Upper lobe of right lung (tissue), 1 donor: ENCODE measurements at regions of chr3 and their contacts with region 1.

Region 1: GRCh38 chr3:38533285-38533976 is 37.3 kb downstream of the EXOG start:
- DNase-seq: no peak
- ATAC-seq: peak; percentile 34
- H3K4me3 ChIP-seq: no peak overlapping the region
- H3K27ac ChIP-seq: no peak overlapping the region
- H3K4me1 ChIP-seq: no peaks in the 10 kb centered on the region
- H3K27me3 ChIP-seq: no peaks in the 10 kb centered on the region
- CTCF ChIP-seq: no peak

Region 2: DNA sequence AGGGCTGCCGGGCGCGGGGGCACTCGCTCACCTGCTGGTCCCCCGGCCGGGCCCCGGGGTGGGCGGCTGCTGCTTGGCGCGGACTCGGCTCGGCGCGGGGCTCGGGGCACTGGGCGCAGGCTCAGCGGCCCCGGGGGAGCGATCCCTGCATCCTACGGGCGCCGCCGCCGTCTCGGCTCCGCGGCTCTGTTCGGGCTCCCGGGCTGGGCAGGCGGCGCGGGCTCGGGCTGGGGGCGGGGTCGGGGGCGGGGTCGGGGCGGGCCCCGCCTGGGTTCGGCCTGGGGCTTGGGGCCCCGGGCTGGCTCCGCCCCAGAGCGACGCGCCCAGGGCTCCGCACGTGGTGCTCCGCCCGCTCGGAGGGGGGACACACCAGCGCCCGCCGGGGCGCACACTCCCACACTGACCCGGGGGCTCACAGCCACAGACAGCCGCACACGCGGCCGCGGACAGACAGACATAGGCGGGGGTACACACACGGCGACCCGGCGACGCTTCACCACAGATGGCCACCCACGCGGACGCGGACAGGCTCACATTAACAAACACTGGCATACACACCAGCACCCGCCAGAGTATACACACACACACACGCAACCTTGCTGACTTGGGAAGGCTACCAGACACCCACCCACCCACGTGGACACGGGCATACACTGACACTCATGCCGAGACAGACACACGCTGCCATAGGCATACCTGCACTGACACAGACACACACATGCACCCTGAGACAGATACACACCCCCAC is 116.2 kb after region 1 on chr3 and contains the start of gene SCN5A:
- intact Hi-C with region 1: loop called (anchors 10 kb)
- DNase-seq: peak; percentile 70
- ATAC-seq: peak; percentile 83
- H3K4me3 ChIP-seq: peak within 1 kb of the TSS; percentile 47
- H3K27ac ChIP-seq: no peak within 1 kb of the TSS
- H3K4me1 ChIP-seq: peaks cover 7% of the 10 kb centered on the region
- H3K27me3 ChIP-seq: peaks cover 51% of the 10 kb centered on the region
- CTCF ChIP-seq: no peak
- total RNA-seq, gene SCN5A: 0.58 TPM